Heart left ventricle (tissue), 16 donors: ENCODE measurements at regions of chr14 and their contacts with region 1.

Region 1: DNA sequence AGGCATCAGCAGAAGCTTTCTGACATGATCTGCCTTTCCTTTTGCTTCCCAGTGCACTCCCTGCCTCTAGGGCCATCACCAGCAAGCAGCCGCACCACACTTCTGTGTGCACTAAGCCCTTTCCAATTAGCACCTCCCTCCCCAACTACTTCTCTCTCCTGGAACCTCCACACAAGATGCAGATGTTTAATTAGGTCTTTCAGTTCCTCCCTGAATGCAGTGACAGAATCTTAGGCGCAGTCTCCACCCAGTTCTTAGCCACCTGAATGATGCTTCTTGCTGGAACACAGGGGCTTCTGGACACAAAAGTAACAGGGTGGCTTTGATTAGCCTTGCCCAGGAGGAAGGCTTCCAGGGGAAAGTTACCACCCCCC is 32.9 kb downstream of the NIN start:
- DNase-seq: no peak
- ATAC-seq: no peak
- H3K4me3 ChIP-seq: no peak overlapping the region
- H3K27ac ChIP-seq: no peak overlapping the region
- H3K4me1 ChIP-seq: peaks cover 0 to 34% (median 6%) of the 10 kb centered on the region in 12 donors
- H3K27me3 ChIP-seq: no peaks in the 10 kb centered on the region
- CTCF ChIP-seq: no peak
- POLR2A ChIP-seq: no peak

Region 2: GRCh38 chr14:50311975-50312733 is 485.9 kb before region 1 on chr14 and contains the starts of genes DMAC2L and L2HGDH:
- intact Hi-C with region 1: no loop called
- DNase-seq: peak; percentile 93 to 96 (median 95)
- ATAC-seq: peak; percentile 99
- H3K4me3 ChIP-seq: peak within 1 kb of the TSS; percentile 64 to 96 (median 84)
- H3K27ac ChIP-seq: peak within 1 kb of the TSS; percentile 67 to 95 (median 93)
- H3K4me1 ChIP-seq: peaks cover 0 to 21% (median 15%) of the 10 kb centered on the region in 12 donors
- H3K27me3 ChIP-seq: no peaks in the 10 kb centered on the region
- CTCF ChIP-seq: peak in 6 of 12 donors; percentile 6 to 47 (median 30)
- POLR2A ChIP-seq: peak in 1 of 2 donors; percentile 77
- total RNA-seq, gene DMAC2L: 12.6 to 29.9 (median 23.7) TPM
- total RNA-seq, gene L2HGDH: 6.5 to 12.2 (median 9.1) TPM

Region 3: GRCh38 chr14:50846226-50846880 is 48.3 kb after region 1 on chr14:
- intact Hi-C with region 1: loop called in 1 of 10 experiments (anchors 10 kb)
- DNase-seq: no peak
- ATAC-seq: no peak
- H3K4me3 ChIP-seq: no peak overlapping the region
- H3K27ac ChIP-seq: no peak overlapping the region
- H3K4me1 ChIP-seq: no peaks in the 10 kb centered on the region
- H3K27me3 ChIP-seq: no peaks in the 10 kb centered on the region
- CTCF ChIP-seq: no peak
- POLR2A ChIP-seq: no peak

Region 4: DNA sequence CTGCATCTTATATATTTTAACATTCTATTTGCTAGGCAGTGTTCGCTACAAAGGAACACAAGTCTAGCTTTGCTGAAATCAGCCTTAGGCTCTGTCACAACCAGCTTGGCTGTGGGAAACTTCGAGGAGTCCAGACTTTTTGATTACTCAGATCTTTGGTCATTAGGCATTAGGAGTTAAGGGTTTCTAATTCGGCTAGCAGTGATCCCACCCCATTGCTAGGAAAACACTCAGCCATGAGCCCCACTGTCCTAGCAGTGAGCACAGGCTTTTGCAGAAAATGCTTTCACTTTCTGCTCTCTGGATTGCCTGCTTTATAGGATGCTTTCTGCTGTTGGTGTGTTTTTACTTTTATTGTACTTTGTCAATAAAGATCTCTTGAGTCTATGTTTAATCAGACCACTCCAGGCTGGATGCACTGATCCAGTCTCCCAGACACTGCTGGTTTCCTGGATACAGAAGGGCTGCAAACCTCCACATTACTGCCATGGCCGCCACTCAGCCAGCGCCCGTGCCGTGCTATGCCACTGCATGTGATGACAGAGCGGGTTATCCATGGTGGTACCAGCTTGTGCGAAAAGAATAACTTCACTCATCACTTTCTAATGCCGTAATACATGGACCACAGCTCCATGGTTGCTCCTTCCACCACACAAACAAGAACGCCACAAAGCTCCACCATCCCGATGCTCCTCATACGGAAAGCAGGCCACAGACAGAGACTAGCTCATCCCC is 187.3 kb after region 1 on chr14:
- intact Hi-C with region 1: no loop called
- DNase-seq: no peak
- ATAC-seq: no peak
- H3K4me3 ChIP-seq: no peak overlapping the region
- H3K27ac ChIP-seq: no peak overlapping the region
- H3K4me1 ChIP-seq: no peaks in the 10 kb centered on the region
- H3K27me3 ChIP-seq: no peaks in the 10 kb centered on the region
- CTCF ChIP-seq: no peak
- POLR2A ChIP-seq: no peak